Lower leg skin (tissue), 4 donors: ENCODE measurements at regions of chr9 and their contacts with region 1.

Region 1: DNA sequence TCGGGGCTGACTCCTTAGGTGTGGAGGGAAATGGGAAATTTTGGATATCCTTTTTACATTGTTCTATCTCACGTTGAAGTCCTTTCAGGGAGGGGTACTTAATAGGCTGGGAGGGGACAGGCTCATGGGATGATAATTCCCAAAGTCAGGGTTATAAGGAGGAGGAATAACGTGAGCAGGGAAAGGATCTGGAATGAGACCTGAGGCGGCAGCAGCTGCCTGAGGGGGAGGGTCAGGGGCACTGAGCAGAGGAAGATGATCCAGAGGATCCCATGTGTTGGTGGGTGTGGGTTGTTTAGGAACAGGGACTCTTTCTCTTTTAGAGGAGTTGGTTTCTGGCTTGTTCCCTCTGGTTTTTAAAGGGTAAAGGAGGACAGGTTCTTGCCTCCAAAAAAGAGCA is 18.7 kb downstream of the IFT74 start:
- DNase-seq: no peak
- H3K4me3 ChIP-seq: no peak overlapping the region
- CTCF ChIP-seq: no peak
- POLR2A ChIP-seq: no peak

Region 2: DNA sequence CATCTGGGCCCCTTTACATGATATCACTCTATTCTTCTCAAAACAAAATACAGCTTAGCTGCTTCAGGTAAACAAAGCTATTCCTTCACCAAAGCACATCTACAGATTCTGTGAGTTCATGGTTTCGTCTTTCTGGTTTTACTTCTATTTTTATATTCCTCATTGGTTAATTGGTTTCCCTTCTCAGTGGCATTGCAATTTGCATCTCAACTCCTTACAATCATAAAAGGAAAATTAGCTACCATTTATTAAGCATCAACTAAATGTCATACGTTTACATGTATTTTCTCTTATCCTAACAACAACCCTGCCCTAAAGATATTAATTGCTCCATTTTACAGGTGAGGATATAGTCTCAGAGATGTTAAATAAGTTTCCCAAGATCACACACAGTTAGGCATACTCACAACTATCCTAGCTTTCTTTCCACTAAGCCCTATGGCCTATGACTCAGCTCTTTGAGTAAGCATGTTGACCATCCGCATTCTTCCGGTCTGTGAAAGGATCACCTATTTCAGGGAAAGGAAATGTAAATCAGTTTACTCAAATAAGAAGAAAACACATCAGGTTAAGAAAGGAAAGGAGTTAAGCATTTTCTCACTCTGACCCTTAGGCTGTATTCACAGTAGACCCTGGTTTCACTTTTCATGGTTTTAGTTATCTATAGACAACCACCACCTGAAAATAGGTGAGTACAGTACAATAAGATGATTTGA is 228.4 kb before region 1 on chr9:
- intact Hi-C with region 1: loop called (anchors 5 kb)
- DNase-seq: no peak
- H3K4me3 ChIP-seq: no peak overlapping the region
- CTCF ChIP-seq: no peak
- POLR2A ChIP-seq: no peak

Region 3: GRCh38 chr9:26946753-26947727 is 27.9 kb before region 1 on chr9 and contains the start of gene PLAA:
- intact Hi-C with region 1: no loop called
- DNase-seq: peak; percentile 85 to 97
- H3K4me3 ChIP-seq: peak within 1 kb of the TSS; percentile 93
- CTCF ChIP-seq: no peak
- POLR2A ChIP-seq: no peak
- total RNA-seq, gene PLAA: 26.3 to 34.6 (median 29.3) TPM

Region 4: DNA sequence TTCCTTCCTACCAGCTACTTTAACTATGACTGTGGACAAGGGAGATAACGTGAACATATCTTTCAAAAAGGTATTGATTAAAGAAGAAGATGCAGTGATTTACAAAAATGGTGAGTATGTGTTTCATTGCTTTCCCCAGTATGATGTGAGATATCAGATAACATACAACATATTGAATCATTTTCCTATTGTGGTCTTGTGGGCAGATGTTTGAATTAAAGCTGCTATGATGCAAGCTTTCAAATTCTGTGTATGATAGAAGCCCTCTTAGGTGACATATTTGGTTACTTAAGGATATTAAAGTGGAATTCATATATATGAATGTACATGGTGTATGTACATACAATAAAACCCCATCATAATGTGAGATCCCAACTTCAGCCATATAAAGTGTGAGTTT is 193.6 kb after region 1 on chr9:
- intact Hi-C with region 1: no loop called
- DNase-seq: no peak
- H3K4me3 ChIP-seq: no peak overlapping the region
- CTCF ChIP-seq: no peak
- POLR2A ChIP-seq: no peak